ENCODE measurements at regions of chr9 and their contacts with region 1.

Region 1: GRCh38 chr9:36813154-36813553 is 220.9 kb downstream of the PAX5 start:
- DNase-seq: no peak
- ATAC-seq: no peak
- H3K4me3 ChIP-seq: no peak overlapping the region
- H3K27ac ChIP-seq: no peak overlapping the region
- H3K4me1 ChIP-seq: peaks cover 0 to 3% (median 1%) of the 10 kb centered on the region in 9 donors
- H3K27me3 ChIP-seq: peaks cover 3 to 52% (median 39%) of the 10 kb centered on the region in 7 donors
- CTCF ChIP-seq: no peak

Region 2: DNA sequence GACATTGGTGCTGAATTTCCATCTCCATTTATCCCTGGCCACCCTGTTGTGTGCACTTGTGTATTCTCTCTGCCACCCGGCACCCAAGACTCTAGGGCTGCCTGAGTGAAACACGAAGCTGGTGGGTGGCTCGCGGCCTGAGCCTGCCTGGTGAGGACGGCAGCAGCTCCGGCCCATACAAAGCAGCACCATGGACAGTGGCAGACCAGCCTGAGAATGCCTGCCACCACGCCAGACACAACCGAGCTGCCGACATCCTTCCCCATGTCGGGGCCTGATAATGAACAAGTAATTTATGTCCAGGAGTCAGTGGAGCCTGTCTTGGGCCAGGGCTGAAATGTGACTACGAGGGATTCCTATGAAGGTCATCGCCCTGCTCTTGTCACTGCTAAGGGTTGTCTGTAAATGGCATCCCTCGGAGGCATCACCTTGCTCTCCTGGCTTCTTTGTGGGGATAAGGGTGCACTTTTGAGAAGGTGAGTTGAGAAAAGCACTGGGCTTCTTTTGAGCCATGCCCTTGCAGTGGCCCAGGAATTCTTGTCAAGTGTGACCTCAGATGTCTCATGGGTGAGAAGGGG is 64.7 kb before region 1 on chr9:
- intact Hi-C with region 1: no loop called
- DNase-seq: peak; percentile 22 to 29
- ATAC-seq: peak in 4 of 8 donors; percentile 42 to 64 (median 50)
- H3K4me3 ChIP-seq: no peak overlapping the region
- H3K27ac ChIP-seq: no peak overlapping the region
- H3K4me1 ChIP-seq: no peaks in the 10 kb centered on the region
- H3K27me3 ChIP-seq: peaks cover 0 to 71% (median 48%) of the 10 kb centered on the region in 7 donors
- CTCF ChIP-seq: no peak

Region 3: GRCh38 chr9:36764364-36765076 is 48.6 kb before region 1 on chr9:
- intact Hi-C with region 1: loop called in 1 of 10 experiments (anchors 5 kb)
- DNase-seq: no peak
- ATAC-seq: no peak
- H3K4me3 ChIP-seq: no peak overlapping the region
- H3K27ac ChIP-seq: no peak overlapping the region
- H3K4me1 ChIP-seq: peaks cover 0 to 6% (median 0%) of the 10 kb centered on the region in 9 donors
- H3K27me3 ChIP-seq: peaks cover 0 to 63% (median 45%) of the 10 kb centered on the region in 7 donors
- CTCF ChIP-seq: no peak